IMR-90 (cell line): ENCODE measurements at regions of chr11 and their contacts with region 1.

Region 1: GRCh38 chr11:29306527-29306926 is 710.3 kb downstream of the KCNA4 start:
- DNase-seq: peak; percentile 94
- ATAC-seq: peak; percentile 86
- H3K4me3 ChIP-seq: no peak overlapping the region
- H3K27ac ChIP-seq: peak overlapping the region; percentile 97
- H3K4me1 ChIP-seq: peaks cover 11% of the 10 kb centered on the region
- H3K27me3 ChIP-seq: no peaks in the 10 kb centered on the region
- CTCF ChIP-seq: no peak
- POLR2A ChIP-seq: no peak
- RAD21 ChIP-seq: no peak; the same call in 1 of the 2 replicates

Region 2: DNA sequence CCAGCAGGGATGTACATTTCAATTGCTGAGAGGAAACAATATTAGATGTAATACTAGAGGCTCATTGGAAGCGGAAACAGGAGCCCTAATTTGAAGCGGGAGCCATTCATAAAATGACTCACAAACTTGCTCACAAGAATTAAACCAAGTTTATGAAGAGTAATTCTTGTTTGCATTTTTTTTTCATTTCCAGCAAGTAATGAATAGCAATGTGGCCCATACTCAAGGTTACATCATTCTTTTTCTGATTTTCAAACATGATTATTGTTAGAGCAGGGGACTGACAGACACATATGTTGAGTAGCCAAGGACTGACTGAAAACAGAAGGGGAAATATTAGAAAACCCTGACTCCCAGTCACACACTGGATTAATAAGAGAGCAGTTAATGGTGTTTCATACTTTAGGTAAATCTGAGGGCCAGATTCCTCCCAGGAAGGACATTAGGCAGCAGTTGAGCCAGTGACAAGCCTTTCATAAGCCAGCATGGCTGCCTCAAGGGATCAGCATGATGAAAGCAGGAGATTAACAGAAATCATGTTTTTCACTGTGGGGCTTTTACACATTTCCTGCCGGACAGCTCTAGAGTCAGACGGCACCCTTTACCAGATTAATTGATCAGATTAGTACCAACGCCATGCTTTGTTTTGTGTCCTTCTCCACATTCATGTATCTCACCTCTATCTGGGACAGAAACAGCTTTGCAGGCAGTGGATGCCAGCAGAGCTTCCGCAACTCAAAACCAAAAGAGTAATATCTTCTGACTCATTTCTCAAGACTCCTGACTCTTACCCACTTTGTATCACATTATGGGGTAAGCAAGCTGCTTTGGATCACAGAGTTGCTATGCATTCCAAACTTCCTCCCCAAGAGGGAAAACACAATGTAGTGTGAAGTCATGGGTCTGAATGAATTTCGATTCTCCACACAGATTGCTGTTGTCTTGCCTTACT is 121.3 kb before region 1 on chr11:
- CTCF ChIA-PET with region 1: no interaction called
- POLR2A ChIA-PET with region 1: no interaction called
- dilution Hi-C with region 1: no loop called
- in situ Hi-C with region 1: no loop called
- intact Hi-C with region 1: loop called (anchors 5 kb)
- DNase-seq: peak; percentile 98
- ATAC-seq: peak; percentile 83
- H3K4me3 ChIP-seq: no peak overlapping the region
- H3K27ac ChIP-seq: peak overlapping the region; percentile 100
- H3K4me1 ChIP-seq: peaks cover 11% of the 10 kb centered on the region
- H3K27me3 ChIP-seq: no peaks in the 10 kb centered on the region
- CTCF ChIP-seq: no peak
- POLR2A ChIP-seq: no peak
- RAD21 ChIP-seq: peak; percentile 26; the same call in 1 of the 2 replicates

Region 3: GRCh38 chr11:29405305-29405704 is 98.8 kb after region 1 on chr11:
- CTCF ChIA-PET with region 1: no interaction called
- POLR2A ChIA-PET with region 1: no interaction called
- dilution Hi-C with region 1: no loop called
- in situ Hi-C with region 1: no loop called
- intact Hi-C with region 1: no loop called
- DNase-seq: peak; percentile 5
- ATAC-seq: no peak
- H3K4me3 ChIP-seq: no peak overlapping the region
- H3K27ac ChIP-seq: no peak overlapping the region
- H3K4me1 ChIP-seq: no peaks in the 10 kb centered on the region
- H3K27me3 ChIP-seq: no peaks in the 10 kb centered on the region
- CTCF ChIP-seq: no peak
- POLR2A ChIP-seq: no peak
- RAD21 ChIP-seq: no peak